ENCODE measurements at regions of chr17 and their contacts with region 1.

Region 1: DNA sequence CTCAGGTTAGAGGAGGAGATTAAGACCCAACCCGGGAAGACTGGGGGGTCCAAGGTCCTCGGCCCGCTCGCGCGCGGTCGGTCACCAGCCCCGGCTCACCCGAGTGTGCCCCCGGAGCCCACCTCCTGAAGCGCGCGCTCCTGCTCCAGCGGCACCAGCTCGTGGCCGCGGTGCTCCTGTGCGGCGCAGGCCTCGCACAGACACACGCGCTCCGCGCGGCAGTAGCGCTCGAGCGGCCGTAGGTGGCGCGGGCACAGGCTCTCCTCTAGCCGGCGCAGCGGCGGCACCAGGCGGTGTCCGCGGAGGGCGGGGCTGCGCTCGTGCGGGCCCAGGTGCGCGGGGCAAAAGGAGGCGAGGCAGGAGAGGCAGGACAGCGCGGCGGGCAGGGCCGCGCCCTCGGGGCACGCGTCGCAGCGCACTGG is 618 bp downstream of the TRIM47 start:
- DNase-seq: peak in 1 of 2 experiments; percentile 86
- ATAC-seq: peak; percentile 60 to 72
- H3K4me3 ChIP-seq: peak overlapping the region; percentile 85
- H3K27ac ChIP-seq: peak overlapping the region; percentile 92 to 94
- H3K4me1 ChIP-seq: peaks cover 36% of the 10 kb centered on the region
- CTCF ChIP-seq: peak; percentile 37
- EP300 ChIP-seq: no peak
- POLR2A ChIP-seq: peak; percentile 18; the same call in 1 of the 2 replicates
- RAD21 ChIP-seq: no peak; a peak in 1 of 5 replicates

Region 2: DNA sequence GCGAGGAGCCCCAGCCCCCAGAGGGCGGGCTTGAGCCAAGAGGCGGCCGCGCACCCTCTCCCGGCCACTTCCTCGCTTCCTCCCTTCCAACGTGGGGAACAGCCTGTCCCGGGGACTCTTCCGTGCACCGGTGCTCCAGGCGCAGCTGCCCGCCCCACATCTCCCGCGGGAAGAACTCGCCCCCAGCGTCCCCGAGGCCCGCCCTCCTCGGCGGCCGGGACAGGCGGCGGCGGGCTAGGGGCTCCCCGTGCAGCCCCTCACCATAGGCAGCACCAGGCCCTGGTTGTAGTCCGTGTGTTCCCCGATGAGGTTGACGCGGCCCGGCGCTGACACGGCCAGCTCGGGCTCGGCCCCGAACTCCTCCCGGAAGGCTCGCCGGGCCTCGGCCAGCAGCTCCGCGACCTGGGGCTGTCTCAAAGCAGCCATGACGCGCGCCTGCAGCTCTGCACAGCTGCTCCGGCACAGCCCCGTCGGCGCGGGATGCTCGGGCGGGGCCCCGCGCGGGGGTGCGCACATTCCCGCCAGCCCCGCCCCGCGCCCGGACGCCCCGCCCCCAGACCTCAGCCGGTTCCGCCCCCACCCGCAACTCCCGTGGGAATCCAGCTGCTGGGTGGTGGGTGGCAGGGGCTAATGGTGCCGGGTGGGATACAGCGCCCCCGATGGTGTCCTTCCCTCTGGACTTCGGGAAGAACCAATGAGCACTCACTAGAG is 112.9 kb before region 1 on chr17 and contains the start of gene GALK1:
- CTCF ChIA-PET with region 1: interaction called, 14 read pairs
- POLR2A ChIA-PET with region 1: interaction called, 3 read pairs
- DNase-seq: peak; percentile 78 to 81
- ATAC-seq: peak; percentile 89 to 91
- H3K4me3 ChIP-seq: peak within 1 kb of the TSS; percentile 68
- H3K27ac ChIP-seq: peak within 1 kb of the TSS; percentile 83 to 92
- H3K4me1 ChIP-seq: peaks cover 13% of the 10 kb centered on the region
- CTCF ChIP-seq: peak; percentile 65
- EP300 ChIP-seq: no peak
- POLR2A ChIP-seq: peak; percentile 71
- RAD21 ChIP-seq: peak; percentile 59 to 66
- polyA plus RNA-seq, gene GALK1: 20.7 and 21.3 TPM in 2 replicates

Region 3: DNA sequence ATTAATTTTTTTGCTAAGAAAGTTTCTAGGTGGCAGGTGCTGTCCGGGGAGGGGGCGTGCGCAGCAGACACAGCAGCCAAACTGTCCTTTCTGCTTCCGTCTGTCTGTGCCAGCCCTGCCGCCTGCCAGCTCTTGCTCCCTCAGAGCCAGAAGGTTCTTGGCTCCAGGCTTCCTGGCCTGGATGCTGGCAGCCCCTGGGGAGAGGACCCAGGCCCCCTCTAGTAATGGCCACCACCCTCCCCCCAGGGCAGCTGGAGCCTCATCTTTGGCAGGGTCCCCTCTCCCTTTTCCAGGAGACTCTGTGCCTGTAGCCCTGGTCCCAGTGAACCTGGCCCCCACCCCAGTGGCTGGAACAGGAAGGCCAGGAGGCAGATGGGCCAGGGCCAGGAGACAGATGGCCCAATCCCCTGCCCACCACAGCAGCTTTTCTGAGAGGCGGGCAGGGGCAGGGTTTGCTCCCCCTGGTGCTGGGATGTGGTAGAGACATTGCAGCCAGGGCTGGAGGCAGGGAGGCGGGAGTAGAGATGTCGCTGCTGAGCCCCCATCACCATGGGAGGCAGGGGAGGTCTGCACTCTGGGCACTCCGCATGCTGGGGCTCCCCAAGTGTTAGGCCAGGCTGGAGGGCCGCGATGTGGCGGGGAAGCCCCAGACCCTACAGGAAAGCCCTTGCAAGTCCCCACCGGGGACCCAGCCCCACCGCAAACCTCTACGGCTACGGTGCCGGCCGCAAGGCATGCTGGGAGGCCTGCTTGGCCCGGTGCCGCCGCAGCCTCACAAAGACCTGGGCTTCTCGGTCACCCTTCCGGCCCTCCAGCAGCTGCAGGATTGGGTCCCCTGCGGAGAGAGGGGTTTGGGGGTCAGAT is 50.3 kb before region 1 on chr17:
- CTCF ChIA-PET with region 1: interaction called, 14 read pairs
- POLR2A ChIA-PET with region 1: no interaction called
- DNase-seq: peak; percentile 44 to 92
- ATAC-seq: peak; percentile 73 to 86; a peak in 5 of 6 replicates
- H3K4me3 ChIP-seq: no peak overlapping the region
- H3K27ac ChIP-seq: peak overlapping the region in 1 of 2 experiments; percentile 27; a peak in 2 of 6 replicates
- H3K4me1 ChIP-seq: peaks cover 5% of the 10 kb centered on the region; the same call in 1 of the 3 replicates
- CTCF ChIP-seq: peak; percentile 55
- EP300 ChIP-seq: no peak
- POLR2A ChIP-seq: no peak
- RAD21 ChIP-seq: peak; percentile 40 to 45; a peak in 3 of 5 replicates

Region 4: DNA sequence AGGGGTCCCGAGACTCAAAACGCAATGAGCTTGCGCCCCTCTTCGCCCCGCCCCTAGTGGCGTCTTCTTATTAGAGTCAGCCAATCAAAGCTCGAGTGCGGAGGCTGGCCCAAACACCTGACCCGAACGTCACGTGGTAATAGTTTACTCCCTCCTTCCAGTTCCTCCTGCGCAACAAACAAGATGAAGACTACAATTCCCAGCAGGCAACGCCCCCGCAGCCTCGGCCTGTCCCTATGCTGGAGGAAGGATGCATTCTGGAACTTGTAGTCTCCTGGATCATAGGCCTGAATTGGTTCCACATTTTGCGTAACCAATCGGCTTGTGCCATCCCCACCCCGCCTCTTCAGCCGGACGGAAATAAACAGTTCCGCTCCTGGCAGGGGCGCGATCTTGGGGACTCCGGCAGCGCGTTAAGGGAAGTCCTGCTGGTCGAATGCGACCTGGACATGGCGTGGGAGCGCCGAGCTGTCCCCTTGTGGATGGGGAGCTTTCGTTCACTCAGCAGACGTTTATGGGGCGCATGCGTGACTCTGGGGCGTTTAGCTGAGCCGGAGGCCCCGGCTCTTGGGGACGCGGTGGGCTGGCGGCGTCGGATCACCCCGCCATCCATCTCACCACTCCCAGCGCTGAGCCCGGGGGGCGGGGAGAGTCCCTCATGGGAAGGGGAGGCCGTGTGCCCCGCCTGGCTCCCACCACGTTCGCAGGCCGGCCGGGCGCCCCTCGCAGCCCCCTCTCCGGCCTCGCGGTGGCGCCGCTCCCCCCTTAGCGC is 22.3 kb before region 1 on chr17 and contains the start of gene WBP2:
- CTCF ChIA-PET with region 1: interaction called, 330 read pairs
- POLR2A ChIA-PET with region 1: interaction called, 27 read pairs
- DNase-seq: peak; percentile 100
- ATAC-seq: peak; percentile 90 to 95
- H3K4me3 ChIP-seq: peak within 1 kb of the TSS; percentile 58
- H3K27ac ChIP-seq: peak within 1 kb of the TSS; percentile 83 to 91
- H3K4me1 ChIP-seq: peaks cover 19% of the 10 kb centered on the region
- CTCF ChIP-seq: peak; percentile 63
- EP300 ChIP-seq: no peak
- POLR2A ChIP-seq: peak; percentile 95
- RAD21 ChIP-seq: peak in 1 of 2 experiments; percentile 65; a peak in 4 of 5 replicates
- polyA plus RNA-seq, gene WBP2: 35.6 and 39.7 TPM in 2 replicates

Region 5: GRCh38 chr17:75896415-75897159 is 18.8 kb after region 1 on chr17 and contains the start of gene TRIM65:
- CTCF ChIA-PET with region 1: interaction called, 513 read pairs
- POLR2A ChIA-PET with region 1: interaction called, 28 read pairs
- DNase-seq: peak; percentile 69 to 83
- ATAC-seq: peak; percentile 76 to 80
- H3K4me3 ChIP-seq: peak within 1 kb of the TSS; percentile 84
- H3K27ac ChIP-seq: peak within 1 kb of the TSS; percentile 90 to 97
- H3K4me1 ChIP-seq: peaks cover 17% of the 10 kb centered on the region
- CTCF ChIP-seq: peak; percentile 59
- EP300 ChIP-seq: no peak
- POLR2A ChIP-seq: peak; percentile 95
- RAD21 ChIP-seq: peak; percentile 12 to 54; a peak in 3 of 5 replicates
- polyA plus RNA-seq, gene TRIM65: 13.5 and 17.4 TPM in 2 replicates

Measured in A549 (cell line).